ENCODE measurements at regions of chr1 and their contacts with region 1.

Region 1: GRCh38 chr1:170881268-170882265 is 53.8 kb upstream of the MROH9 start:
- DNase-seq: no peak
- ATAC-seq: peak; percentile 71

Region 2: GRCh38 chr1:169928438-169929209 is 952.9 kb before region 1 on chr1:
- intact Hi-C with region 1: loop called (anchors 5 kb)
- DNase-seq: no peak
- ATAC-seq: peak; percentile 54

Region 3: DNA sequence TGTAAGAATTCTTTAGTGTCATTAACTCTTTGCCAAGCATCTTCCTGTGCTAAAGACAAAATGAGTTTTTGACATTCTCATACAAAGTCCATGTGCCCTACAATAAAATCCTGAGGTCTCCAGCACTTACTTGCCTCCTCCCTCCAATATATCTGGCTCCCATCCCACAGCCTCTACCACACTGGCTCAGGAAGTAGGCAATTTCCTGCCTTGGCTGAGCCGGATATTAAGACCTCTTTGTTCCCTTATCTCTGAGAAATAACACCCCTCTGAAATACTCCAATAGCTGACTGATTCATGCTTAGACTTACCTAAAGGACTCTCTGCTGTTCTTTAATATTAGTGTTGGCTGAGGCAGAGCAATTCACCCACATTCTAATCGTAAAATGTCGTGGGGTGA is 387.2 kb before region 1 on chr1:
- intact Hi-C with region 1: no loop called
- DNase-seq: no peak
- ATAC-seq: peak; percentile 70

Region 4: GRCh38 chr1:170537798-170538503 is 343.6 kb before region 1 on chr1:
- intact Hi-C with region 1: loop called (anchors 5 kb)
- DNase-seq: no peak
- ATAC-seq: peak; percentile 73

Measured in left ventricle myocardium superior (tissue), 1 donor.